CD4-positive, alpha-beta memory T cell (primary cell): ENCODE measurements at regions of chr6 and their contacts with region 1.

Region 1: GRCh38 chr6:82270881-82271645 is 23.5 kb upstream of the IBTK start:
- DNase-seq: peak in 4 of 5 donors; percentile 37 to 52 (median 40)
- H3K4me3 ChIP-seq: no peak overlapping the region
- H3K4me3 Mint-ChIP-seq: no peak overlapping the region
- H3K27ac ChIP-seq: no peak overlapping the region
- H3K27ac Mint-ChIP-seq: peak overlapping the region in 1 of 7 donors; percentile 37
- H3K4me1 ChIP-seq: no peaks in the 10 kb centered on the region
- H3K4me1 Mint-ChIP-seq: peaks cover 0 to 1% (median 0%) of the 10 kb centered on the region in 4 donors
- H3K27me3 ChIP-seq: no peaks in the 10 kb centered on the region
- H3K27me3 Mint-ChIP-seq: peaks cover 0 to 3% of the 10 kb centered on the region in 2 donors

Region 2: GRCh38 chr6:82363351-82364086 is 92.5 kb after region 1 on chr6 and contains the start of gene TPBG:
- CTCF ChIA-PET with region 1: no interaction called
- POLR2A ChIA-PET with region 1: no interaction called
- intact Hi-C with region 1: loop called (anchors 5 kb)
- DNase-seq: peak; percentile 5 to 39 (median 15)
- H3K4me3 ChIP-seq: peak within 1 kb of the TSS; percentile 29 to 52
- H3K4me3 Mint-ChIP-seq: peak within 1 kb of the TSS; percentile 85 to 91 (median 88)
- H3K27ac ChIP-seq: no peak within 1 kb of the TSS
- H3K27ac Mint-ChIP-seq: peak within 1 kb of the TSS in 4 of 7 donors; percentile 9 to 77 (median 46)
- H3K4me1 ChIP-seq: peaks cover 11% of the 10 kb centered on the region
- H3K4me1 Mint-ChIP-seq: peaks cover 7 to 31% (median 21%) of the 10 kb centered on the region in 4 donors
- H3K27me3 ChIP-seq: peaks cover 14% of the 10 kb centered on the region
- H3K27me3 Mint-ChIP-seq: peaks cover 15 to 27% of the 10 kb centered on the region in 2 donors
- total RNA-seq, gene TPBG: 0.79 to 1.00 TPM

Region 3: DNA sequence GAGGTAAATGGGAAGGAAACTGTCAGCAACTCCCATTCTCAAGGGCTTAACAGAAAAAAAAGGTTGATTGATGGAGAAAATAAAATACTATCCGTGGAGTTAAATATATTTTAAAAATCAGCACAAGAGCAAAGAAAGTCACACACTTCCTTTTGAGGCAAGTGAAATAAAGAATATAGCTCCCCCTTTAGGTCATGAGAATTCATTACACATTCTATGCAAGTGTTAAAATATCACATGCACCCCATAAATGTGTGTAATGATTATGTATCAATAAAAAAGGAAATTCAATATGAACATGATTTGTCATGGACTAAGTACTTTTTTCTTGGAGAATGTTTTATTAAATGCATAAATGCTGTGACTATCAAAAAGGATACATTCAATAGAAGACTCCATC is 441.8 kb after region 1 on chr6:
- CTCF ChIA-PET with region 1: interaction called, 11 read pairs
- POLR2A ChIA-PET with region 1: no interaction called
- intact Hi-C with region 1: no loop called
- DNase-seq: no peak
- H3K4me3 ChIP-seq: no peak overlapping the region
- H3K4me3 Mint-ChIP-seq: no peak overlapping the region
- H3K27ac ChIP-seq: no peak overlapping the region
- H3K27ac Mint-ChIP-seq: no peak overlapping the region
- H3K4me1 ChIP-seq: no peaks in the 10 kb centered on the region
- H3K4me1 Mint-ChIP-seq: peaks cover 0 to 1% (median 0%) of the 10 kb centered on the region in 4 donors
- H3K27me3 ChIP-seq: no peaks in the 10 kb centered on the region
- H3K27me3 Mint-ChIP-seq: peaks cover 6 to 9% of the 10 kb centered on the region in 2 donors

Region 4: GRCh38 chr6:83215131-83216047 is 944.3 kb after region 1 on chr6:
- CTCF ChIA-PET with region 1: interaction called, 7 read pairs
- POLR2A ChIA-PET with region 1: no interaction called
- intact Hi-C with region 1: loop called (anchors 1 kb)
- DNase-seq: peak; percentile 49 to 51 (median 50)
- H3K4me3 ChIP-seq: no peak overlapping the region
- H3K4me3 Mint-ChIP-seq: no peak overlapping the region
- H3K27ac ChIP-seq: no peak overlapping the region
- H3K27ac Mint-ChIP-seq: no peak overlapping the region
- H3K4me1 ChIP-seq: no peaks in the 10 kb centered on the region
- H3K4me1 Mint-ChIP-seq: no peaks in the 10 kb centered on the region
- H3K27me3 ChIP-seq: no peaks in the 10 kb centered on the region
- H3K27me3 Mint-ChIP-seq: peaks cover 3 to 9% of the 10 kb centered on the region in 2 donors